PC-9 (cell line): ENCODE measurements at regions of chr20 and their contacts with region 1.

Region 1: DNA sequence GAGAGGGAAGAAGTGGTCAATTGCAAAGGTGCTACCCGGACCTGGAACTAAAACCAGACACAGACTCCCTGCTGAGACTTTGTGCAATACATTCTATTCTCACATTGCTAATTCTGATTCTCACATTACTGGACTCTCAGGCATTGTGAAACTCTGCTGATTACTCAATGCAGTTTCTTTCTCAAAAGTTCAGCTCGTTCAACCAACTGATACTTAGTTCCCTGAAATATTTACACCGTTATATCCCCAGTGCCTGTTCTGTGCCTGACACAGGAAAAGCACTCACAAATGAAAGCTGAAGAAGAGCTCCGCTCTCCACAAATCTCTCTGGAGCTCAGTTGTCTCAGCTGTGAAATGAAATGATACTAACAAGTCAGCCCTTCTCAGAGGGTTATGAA is 504 bp upstream of the SLPI start:
- DNase-seq: peak in 1 of 2 experiments; percentile 95
- H3K4me3 ChIP-seq: peak overlapping the region; percentile 73; the same call in 1 of the 2 replicates
- H3K27ac ChIP-seq: peak overlapping the region; percentile 97
- H3K4me1 ChIP-seq: peaks cover 68% of the 10 kb centered on the region
- H3K27me3 ChIP-seq: no peaks in the 10 kb centered on the region
- CTCF ChIP-seq: no peak

Region 2: DNA sequence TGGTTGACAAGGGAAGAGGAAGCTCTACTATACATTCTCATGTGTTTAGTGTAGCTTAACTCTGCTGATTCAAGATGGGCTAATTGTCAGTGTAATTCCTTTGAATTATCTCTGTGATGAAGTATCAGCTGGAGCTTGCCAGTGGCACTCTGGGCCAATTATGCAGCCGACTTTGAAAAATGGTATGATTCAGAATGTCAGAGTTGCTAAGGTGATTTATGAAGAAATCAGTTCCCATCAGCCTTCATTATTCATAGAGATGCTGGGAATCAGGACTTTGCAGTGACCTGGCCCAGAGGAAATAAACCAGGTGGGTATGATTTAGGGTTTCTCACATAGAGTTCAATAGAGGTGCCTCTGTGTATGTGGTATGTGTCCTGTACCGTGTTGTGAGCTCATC is 187.3 kb before region 1 on chr20:
- CTCF ChIA-PET with region 1: no interaction called
- POLR2A ChIA-PET with region 1: no interaction called
- intact Hi-C with region 1: loop called (anchors 1 kb)
- DNase-seq: peak; percentile 8 to 50
- H3K4me3 ChIP-seq: no peak overlapping the region
- H3K27ac ChIP-seq: peak overlapping the region; percentile 72
- H3K4me1 ChIP-seq: peaks cover 35% of the 10 kb centered on the region
- H3K27me3 ChIP-seq: no peaks in the 10 kb centered on the region
- CTCF ChIP-seq: no peak

Region 3: GRCh38 chr20:45138561-45139300 is 116.1 kb before region 1 on chr20:
- CTCF ChIA-PET with region 1: no interaction called
- POLR2A ChIA-PET with region 1: interaction called, 11 read pairs
- intact Hi-C with region 1: no loop called
- DNase-seq: peak; percentile 62 to 73
- H3K4me3 ChIP-seq: no peak overlapping the region
- H3K27ac ChIP-seq: no peak overlapping the region
- H3K4me1 ChIP-seq: 0 out of 2 replicates have a peak, but pooled peaks cover 7% of the 10 kb centered on the region
- H3K27me3 ChIP-seq: no peaks in the 10 kb centered on the region
- CTCF ChIP-seq: peak; percentile 97

Region 4: DNA sequence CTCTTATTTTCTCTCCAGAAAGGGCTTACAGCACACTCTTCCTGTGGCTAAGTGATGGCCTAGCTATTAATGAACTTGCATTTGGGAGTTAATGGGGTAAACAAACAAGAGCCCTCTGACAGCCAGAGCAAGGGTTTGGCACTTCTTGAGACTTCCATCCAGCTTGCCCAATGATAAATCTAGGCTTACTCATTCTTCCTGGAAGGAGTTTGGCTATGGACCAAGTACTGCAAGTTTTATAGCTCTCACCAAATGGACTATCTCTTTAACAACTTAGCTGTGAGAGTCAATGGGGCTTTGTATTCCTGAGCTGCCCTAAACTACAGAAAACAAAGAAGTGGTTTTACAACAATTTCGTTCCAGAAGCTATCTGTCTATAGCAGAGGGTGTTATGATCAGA is 96.9 kb before region 1 on chr20:
- CTCF ChIA-PET with region 1: no interaction called
- POLR2A ChIA-PET with region 1: interaction called, 10 read pairs
- intact Hi-C with region 1: no loop called
- DNase-seq: peak in 1 of 2 experiments; percentile 85
- H3K4me3 ChIP-seq: no peak overlapping the region
- H3K27ac ChIP-seq: no peak overlapping the region
- H3K4me1 ChIP-seq: peaks cover 22% of the 10 kb centered on the region
- H3K27me3 ChIP-seq: no peaks in the 10 kb centered on the region
- CTCF ChIP-seq: no peak

Region 5: DNA sequence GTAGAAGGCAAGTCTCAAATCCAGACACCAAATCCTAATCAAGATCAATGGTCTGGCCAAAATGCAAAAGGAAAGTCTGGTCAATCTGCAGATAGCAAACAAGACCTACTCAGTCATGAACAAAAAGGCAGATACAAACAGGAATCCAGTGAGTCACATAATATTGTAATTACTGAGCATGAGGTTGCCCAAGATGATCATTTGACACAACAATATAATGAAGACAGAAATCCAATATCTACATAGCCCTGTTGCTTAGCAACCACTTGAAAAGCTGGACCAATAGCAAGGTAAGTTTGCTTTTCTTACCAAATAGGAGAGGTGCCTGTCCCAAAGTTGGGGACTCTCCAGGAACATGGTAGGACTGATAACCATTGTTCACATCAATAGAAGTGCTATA is 31.7 kb before region 1 on chr20:
- CTCF ChIA-PET with region 1: no interaction called
- POLR2A ChIA-PET with region 1: no interaction called
- intact Hi-C with region 1: no loop called
- DNase-seq: peak in 1 of 2 experiments; percentile 52
- H3K4me3 ChIP-seq: no peak overlapping the region
- H3K27ac ChIP-seq: no peak overlapping the region
- H3K4me1 ChIP-seq: peaks cover 16% of the 10 kb centered on the region
- H3K27me3 ChIP-seq: no peaks in the 10 kb centered on the region
- CTCF ChIP-seq: no peak

Region 6: DNA sequence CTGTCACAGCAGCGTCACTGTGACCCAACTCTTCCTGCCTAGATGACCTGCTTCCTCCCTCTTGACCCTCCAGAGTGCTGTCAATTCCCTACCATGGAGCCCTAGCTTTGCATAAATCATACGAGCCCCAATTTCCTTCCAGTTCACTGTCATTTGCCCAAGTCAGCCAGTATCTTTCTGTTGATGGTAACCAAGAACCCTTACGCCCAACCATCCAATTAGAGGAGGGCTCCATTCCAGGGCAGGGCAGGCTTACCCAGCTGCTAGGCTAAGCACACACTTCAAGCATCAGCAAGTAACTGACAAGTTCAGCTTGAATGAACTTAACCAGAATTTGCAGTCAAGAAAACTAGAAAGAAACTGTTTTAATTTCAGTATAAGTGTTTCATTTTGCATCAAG is 511.1 kb after region 1 on chr20:
- CTCF ChIA-PET with region 1: no interaction called
- POLR2A ChIA-PET with region 1: interaction called, 10 read pairs
- intact Hi-C with region 1: no loop called
- DNase-seq: no peak
- H3K4me3 ChIP-seq: no peak overlapping the region
- H3K27ac ChIP-seq: no peak overlapping the region
- H3K4me1 ChIP-seq: no peaks in the 10 kb centered on the region
- H3K27me3 ChIP-seq: no peaks in the 10 kb centered on the region
- CTCF ChIP-seq: no peak